ENCODE measurements at regions of chr7 and their contacts with region 1.

Region 1: DNA sequence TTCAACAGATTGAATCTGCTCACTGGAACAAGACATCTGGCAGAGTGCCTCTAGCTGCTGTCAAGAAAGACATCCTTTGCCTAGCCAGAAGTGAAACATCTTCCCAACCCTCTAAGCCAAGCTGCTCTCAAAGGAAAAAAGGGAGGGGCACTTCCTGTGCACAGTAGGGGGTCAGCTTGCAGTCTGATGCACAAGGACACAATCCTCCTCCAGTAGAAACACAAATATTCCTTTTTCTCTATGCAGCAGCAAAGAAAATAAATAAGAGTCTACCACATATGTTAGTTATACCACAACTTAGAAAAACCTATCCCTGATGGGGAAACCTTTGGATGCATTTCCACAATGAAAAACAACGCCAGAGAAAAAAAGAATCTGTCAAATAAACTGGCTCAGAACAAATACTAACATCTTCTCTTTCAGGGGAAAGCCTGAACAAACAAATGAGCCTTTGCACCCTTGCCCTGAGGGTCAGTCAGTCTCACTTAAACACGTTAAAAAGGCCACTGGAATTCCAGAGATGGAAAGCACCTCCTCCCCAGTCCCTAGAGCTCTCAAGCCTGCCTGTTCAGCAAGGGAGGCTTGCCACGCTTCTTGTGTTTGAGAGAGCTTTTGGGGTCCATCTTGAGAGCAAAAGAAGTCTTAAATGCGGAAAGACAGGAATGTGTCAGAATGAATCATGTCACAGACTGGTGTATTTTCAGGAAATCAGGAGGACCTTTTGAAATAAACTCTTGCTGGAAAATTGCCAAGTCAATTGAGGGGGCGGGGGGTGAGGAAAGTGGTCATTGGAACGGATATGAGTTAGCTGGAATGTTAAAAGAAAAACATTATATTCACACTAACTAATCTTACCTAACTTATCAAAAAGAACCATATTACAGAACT is 7.5 kb downstream of the LAMB1 start:
- DNase-seq: peak; percentile 22
- H3K4me3 Mint-ChIP-seq: peak overlapping the region; percentile 24
- H3K27ac Mint-ChIP-seq: peak overlapping the region; percentile 5
- H3K4me1 Mint-ChIP-seq: peaks cover 31% of the 10 kb centered on the region
- H3K27me3 Mint-ChIP-seq: no peaks in the 10 kb centered on the region
- CTCF ChIP-seq: no peak

Region 2: DNA sequence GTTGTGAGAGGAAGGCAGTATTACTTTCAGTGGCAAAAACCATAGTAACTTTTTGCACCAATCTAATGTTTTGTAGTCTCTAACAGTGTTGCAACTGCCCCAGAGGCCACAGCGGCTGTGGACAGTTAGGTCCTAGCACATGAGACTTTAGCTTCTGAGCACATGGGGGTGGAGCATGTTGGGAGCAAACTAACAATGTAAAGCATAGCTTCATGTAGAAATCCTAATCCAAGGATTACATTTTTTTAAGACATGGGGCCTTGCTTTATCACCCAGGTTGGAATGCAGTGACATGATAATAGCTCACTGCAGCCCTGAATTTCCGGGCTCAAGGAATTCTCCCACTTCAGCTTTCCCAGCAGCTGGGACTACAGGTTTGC is 41.5 kb before region 1 on chr7:
- CTCF ChIA-PET with region 1: interaction called, 3 read pairs
- intact Hi-C with region 1: loop called (anchors 5 kb)
- DNase-seq: no peak
- H3K4me3 Mint-ChIP-seq: no peak overlapping the region
- H3K27ac Mint-ChIP-seq: no peak overlapping the region
- H3K4me1 Mint-ChIP-seq: peaks cover 17% of the 10 kb centered on the region
- H3K27me3 Mint-ChIP-seq: no peaks in the 10 kb centered on the region
- CTCF ChIP-seq: no peak